HCT116 (cell line): ENCODE measurements at regions of chr18 and their contacts with region 1.

Region 1: DNA sequence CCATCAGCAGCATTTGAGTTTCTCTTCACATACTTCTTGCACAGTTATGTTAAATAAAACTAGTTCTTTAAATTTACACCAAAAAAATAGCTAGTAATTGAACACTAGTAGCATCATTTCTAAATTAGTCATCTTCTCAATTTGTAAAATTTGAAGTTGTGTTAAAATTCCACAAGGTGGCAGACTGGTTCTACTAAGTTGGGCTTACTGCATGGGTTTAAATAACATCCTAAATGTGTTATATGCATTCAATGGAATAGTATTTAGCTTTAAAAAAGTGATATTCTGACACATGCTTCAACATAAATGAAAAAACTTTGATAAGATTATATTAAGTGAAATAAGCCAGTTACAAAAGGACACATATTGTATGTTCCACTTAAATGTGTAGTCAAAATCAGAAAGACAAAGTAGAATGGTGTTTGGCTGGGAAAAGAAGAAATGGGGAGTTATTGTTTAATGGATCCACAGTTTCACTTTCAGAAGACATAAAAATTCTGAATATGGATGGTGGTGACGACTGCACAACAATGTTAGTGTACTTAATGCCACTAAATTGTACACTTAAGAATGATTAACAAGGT is 28.7 kb upstream of the RPRD1A start:
- DNase-seq: peak; percentile 71
- ATAC-seq: peak; percentile 73
- H3K4me3 ChIP-seq: no peak overlapping the region
- H3K27ac ChIP-seq: no peak overlapping the region
- H3K4me1 ChIP-seq: no peaks in the 10 kb centered on the region
- H3K27me3 ChIP-seq: no peaks in the 10 kb centered on the region
- CTCF ChIP-seq: peak; percentile 37 to 75 (median 75); a peak in 4 of 6 replicates
- POLR2A ChIP-seq: no peak
- RAD21 ChIP-seq: peak; percentile 81

Region 2: DNA sequence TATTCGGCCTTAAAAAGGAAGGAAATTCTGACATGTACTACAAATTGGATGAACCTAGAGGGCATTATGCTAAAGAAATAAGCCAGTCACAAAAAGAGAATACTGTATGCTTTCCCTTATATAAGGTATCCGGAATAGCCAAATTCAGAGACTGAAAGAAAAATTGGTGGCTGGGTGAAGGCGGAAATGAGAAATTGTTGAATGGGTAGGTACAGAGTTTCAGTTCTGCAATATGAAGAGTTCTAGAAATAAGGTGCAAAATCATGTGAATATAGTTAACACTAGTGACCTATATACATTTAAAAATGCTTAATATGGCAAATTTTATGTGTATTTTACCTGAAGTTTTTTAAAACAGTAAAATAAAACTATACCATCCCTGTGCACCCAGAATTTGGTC is 80.4 kb before region 1 on chr18:
- CTCF ChIA-PET with region 1: interaction called, 9 read pairs
- POLR2A ChIA-PET with region 1: no interaction called
- RAD21 ChIA-PET with region 1: no interaction called
- intact Hi-C with region 1: loop called (anchors 2 kb)
- DNase-seq: no peak
- ATAC-seq: no peak
- H3K4me3 ChIP-seq: no peak overlapping the region
- H3K27ac ChIP-seq: no peak overlapping the region
- H3K4me1 ChIP-seq: no peaks in the 10 kb centered on the region
- H3K27me3 ChIP-seq: no peaks in the 10 kb centered on the region
- CTCF ChIP-seq: no peak
- POLR2A ChIP-seq: no peak
- RAD21 ChIP-seq: no peak

Region 3: DNA sequence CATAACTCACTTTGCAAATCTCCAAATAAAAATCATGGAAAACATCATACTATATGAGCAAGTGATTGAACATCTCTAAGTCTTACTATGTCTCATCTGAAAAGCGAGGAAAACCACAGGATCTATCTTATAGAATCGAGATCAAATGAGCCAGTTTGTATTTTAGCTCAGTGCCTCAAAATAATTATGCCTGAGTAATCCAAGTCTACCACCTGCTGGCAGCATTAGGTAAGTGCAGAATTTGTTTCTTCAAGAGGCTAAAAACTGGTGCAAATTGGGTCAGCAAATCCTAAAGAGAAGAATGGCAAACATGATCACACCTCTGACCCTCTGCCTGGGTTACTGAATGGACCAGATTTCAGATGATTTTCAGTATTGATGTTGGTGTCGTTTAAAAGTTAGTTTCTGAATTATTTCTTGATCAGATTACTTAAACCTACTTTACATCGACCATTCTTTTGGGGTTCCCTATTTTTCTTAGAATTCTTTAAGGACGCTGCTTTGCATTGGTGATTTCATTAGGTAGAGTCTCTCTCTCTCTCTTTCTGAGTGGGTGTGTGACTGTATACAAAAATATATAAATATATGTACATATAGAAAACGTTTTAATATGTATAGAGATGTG is 188.8 kb after region 1 on chr18:
- CTCF ChIA-PET with region 1: interaction called, 94 read pairs
- POLR2A ChIA-PET with region 1: interaction called, 5 read pairs
- RAD21 ChIA-PET with region 1: interaction called, 4 to 11 read pairs
- intact Hi-C with region 1: loop called (anchors 1 kb)
- DNase-seq: peak; percentile 60
- ATAC-seq: peak; percentile 74
- H3K4me3 ChIP-seq: no peak overlapping the region
- H3K27ac ChIP-seq: no peak overlapping the region
- H3K4me1 ChIP-seq: no peaks in the 10 kb centered on the region
- H3K27me3 ChIP-seq: 0 out of 2 replicates have a peak, but pooled peaks cover 2% of the 10 kb centered on the region
- CTCF ChIP-seq: peak; percentile 70 to 94 (median 89)
- POLR2A ChIP-seq: no peak
- RAD21 ChIP-seq: peak; percentile 94

Region 4: GRCh38 chr18:36411745-36412168 is 315.7 kb after region 1 on chr18:
- CTCF ChIA-PET with region 1: interaction called, 9 read pairs
- POLR2A ChIA-PET with region 1: no interaction called
- RAD21 ChIA-PET with region 1: no interaction called
- intact Hi-C with region 1: loop called (anchors 5 kb)
- DNase-seq: peak; percentile 50
- ATAC-seq: peak; percentile 87
- H3K4me3 ChIP-seq: no peak overlapping the region
- H3K27ac ChIP-seq: no peak overlapping the region
- H3K4me1 ChIP-seq: 0 out of 4 replicates have a peak, but pooled peaks cover 0 to 4% of the 10 kb centered on the region in 2 experiments
- H3K27me3 ChIP-seq: no peaks in the 10 kb centered on the region
- CTCF ChIP-seq: peak; percentile 67 to 82 (median 69); a peak in 5 of 6 replicates
- POLR2A ChIP-seq: no peak
- RAD21 ChIP-seq: peak; percentile 55; the same call in 1 of the 2 replicates

Region 5: GRCh38 chr18:36572135-36572856 is 476.3 kb after region 1 on chr18:
- CTCF ChIA-PET with region 1: interaction called, 5 read pairs
- POLR2A ChIA-PET with region 1: no interaction called
- RAD21 ChIA-PET with region 1: no interaction called
- intact Hi-C with region 1: loop called (anchors 1 kb)
- DNase-seq: peak; percentile 8
- ATAC-seq: peak; percentile 77
- H3K4me3 ChIP-seq: no peak overlapping the region
- H3K27ac ChIP-seq: no peak overlapping the region
- H3K4me1 ChIP-seq: no peaks in the 10 kb centered on the region
- H3K27me3 ChIP-seq: 0 out of 2 replicates have a peak, but pooled peaks cover 3% of the 10 kb centered on the region
- CTCF ChIP-seq: peak; percentile 33 to 59 (median 40); a peak in 5 of 6 replicates
- POLR2A ChIP-seq: no peak
- RAD21 ChIP-seq: peak; percentile 46

Region 6: GRCh38 chr18:36757081-36757480 is 661.1 kb after region 1 on chr18:
- CTCF ChIA-PET with region 1: interaction called, 5 read pairs
- POLR2A ChIA-PET with region 1: no interaction called
- RAD21 ChIA-PET with region 1: no interaction called
- intact Hi-C with region 1: loop called (anchors 2 kb)
- DNase-seq: peak; percentile 44
- ATAC-seq: peak; percentile 85
- H3K4me3 ChIP-seq: no peak overlapping the region
- H3K27ac ChIP-seq: no peak overlapping the region
- H3K4me1 ChIP-seq: no peaks in the 10 kb centered on the region; a peak in 1 of 4 replicates
- H3K27me3 ChIP-seq: no peaks in the 10 kb centered on the region
- CTCF ChIP-seq: peak; percentile 56 to 71 (median 67)
- POLR2A ChIP-seq: no peak
- RAD21 ChIP-seq: peak; percentile 83

Region 7: GRCh38 chr18:36809590-36810381 is 713.8 kb after region 1 on chr18:
- CTCF ChIA-PET with region 1: no interaction called
- POLR2A ChIA-PET with region 1: no interaction called
- RAD21 ChIA-PET with region 1: no interaction called
- intact Hi-C with region 1: loop called (anchors 5 kb)
- DNase-seq: peak; percentile 39
- ATAC-seq: peak; percentile 99
- H3K4me3 ChIP-seq: no peak overlapping the region
- H3K27ac ChIP-seq: no peak overlapping the region
- H3K4me1 ChIP-seq: no peaks in the 10 kb centered on the region
- H3K27me3 ChIP-seq: no peaks in the 10 kb centered on the region
- CTCF ChIP-seq: peak; percentile 51 to 79 (median 73); a peak in 5 of 6 replicates
- POLR2A ChIP-seq: no peak
- RAD21 ChIP-seq: peak; percentile 53